Activated CD8-positive, alpha-beta T cell treated with anti-CD3 and anti-CD28 coated beads, Interleukin-2, amount 10 ng/mL, durations not matched to agents 7 days and 5 days (primary cell): ENCODE measurements at regions of chr16 and their contacts with region 1.

Region 1: DNA sequence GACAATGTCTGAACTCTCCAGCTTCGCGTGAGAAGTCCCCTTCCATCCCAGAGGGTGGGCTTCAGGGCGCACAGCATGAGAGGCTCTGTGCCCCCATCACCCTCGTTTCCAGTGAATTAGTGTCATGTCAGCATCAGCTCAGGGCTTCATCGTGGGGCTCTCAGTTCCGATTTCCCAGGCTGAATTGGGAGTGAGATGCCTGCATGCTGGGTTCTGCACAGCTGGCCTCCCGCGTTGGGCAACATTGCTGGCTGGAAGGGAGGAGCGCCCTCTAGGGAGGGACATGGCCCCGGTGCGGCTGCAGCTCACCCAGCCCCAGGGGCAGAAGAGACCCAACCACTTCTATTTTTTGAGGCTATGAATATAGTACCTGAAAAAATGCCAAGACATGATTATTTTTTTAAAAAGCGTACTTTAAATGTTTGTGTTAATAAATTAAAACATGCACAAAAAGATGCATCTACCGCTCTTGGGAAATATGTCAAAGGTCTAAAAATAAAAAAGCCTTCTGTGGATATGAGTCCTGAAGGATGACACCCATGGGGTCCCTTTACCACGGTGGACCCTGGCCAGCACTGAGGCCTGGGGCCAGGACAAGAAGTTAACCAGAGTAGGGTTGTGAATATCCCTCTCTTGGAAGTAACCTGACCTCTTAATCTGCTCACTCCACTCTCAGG is 10.5 kb upstream of the ITGAD start:
- DNase-seq: peak; percentile 80
- ATAC-seq: peak; percentile 87
- H3K4me3 Mint-ChIP-seq: no peak overlapping the region
- H3K27ac Mint-ChIP-seq: no peak overlapping the region
- H3K4me1 Mint-ChIP-seq: peaks cover 38% of the 10 kb centered on the region
- H3K27me3 Mint-ChIP-seq: peaks cover 8% of the 10 kb centered on the region

Region 2: GRCh38 chr16:31202414-31203375 is 179.9 kb before region 1 on chr16 and contains the start of gene PYCARD:
- CTCF ChIA-PET with region 1: interaction called, 35 read pairs
- POLR2A ChIA-PET with region 1: no interaction called
- DNase-seq: peak; percentile 58
- ATAC-seq: peak; percentile 37
- H3K4me3 Mint-ChIP-seq: peak within 1 kb of the TSS; percentile 89
- H3K27ac Mint-ChIP-seq: peak within 1 kb of the TSS; percentile 64
- H3K4me1 Mint-ChIP-seq: peaks cover 62% of the 10 kb centered on the region
- H3K27me3 Mint-ChIP-seq: no peaks in the 10 kb centered on the region
- total RNA-seq, gene PYCARD: 97.7 to 99.5 TPM

Region 3: GRCh38 chr16:31395647-31396046 is 13.0 kb after region 1 on chr16:
- CTCF ChIA-PET with region 1: interaction called, 10 read pairs
- POLR2A ChIA-PET with region 1: no interaction called
- DNase-seq: no peak
- ATAC-seq: no peak
- H3K4me3 Mint-ChIP-seq: no peak overlapping the region
- H3K27ac Mint-ChIP-seq: peak overlapping the region; percentile 57
- H3K4me1 Mint-ChIP-seq: peaks cover 50% of the 10 kb centered on the region
- H3K27me3 Mint-ChIP-seq: peaks cover 3% of the 10 kb centered on the region

Region 4: GRCh38 chr16:31421587-31421986 is 39.0 kb after region 1 on chr16:
- CTCF ChIA-PET with region 1: interaction called, 14 read pairs
- POLR2A ChIA-PET with region 1: interaction called, 3 read pairs
- DNase-seq: peak; percentile 89
- ATAC-seq: peak; percentile 87
- H3K4me3 Mint-ChIP-seq: peak overlapping the region; percentile 60
- H3K27ac Mint-ChIP-seq: peak overlapping the region; percentile 94
- H3K4me1 Mint-ChIP-seq: peaks cover 77% of the 10 kb centered on the region
- H3K27me3 Mint-ChIP-seq: peaks cover 10% of the 10 kb centered on the region

Region 5: GRCh38 chr16:31440516-31441184 is 58.0 kb after region 1 on chr16:
- CTCF ChIA-PET with region 1: interaction called, 22 read pairs
- POLR2A ChIA-PET with region 1: interaction called, 3 read pairs
- DNase-seq: no peak
- ATAC-seq: no peak
- H3K4me3 Mint-ChIP-seq: no peak overlapping the region
- H3K27ac Mint-ChIP-seq: no peak overlapping the region
- H3K4me1 Mint-ChIP-seq: peaks cover 29% of the 10 kb centered on the region
- H3K27me3 Mint-ChIP-seq: peaks cover 5% of the 10 kb centered on the region

Region 6: GRCh38 chr16:31636433-31636832 is 253.8 kb after region 1 on chr16:
- CTCF ChIA-PET with region 1: no interaction called
- POLR2A ChIA-PET with region 1: no interaction called
- DNase-seq: no peak
- ATAC-seq: no peak
- H3K4me3 Mint-ChIP-seq: no peak overlapping the region
- H3K27ac Mint-ChIP-seq: no peak overlapping the region
- H3K4me1 Mint-ChIP-seq: no peaks in the 10 kb centered on the region
- H3K27me3 Mint-ChIP-seq: peaks cover 5% of the 10 kb centered on the region